ENCODE measurements at regions of chr9 and their contacts with region 1.

Region 1: GRCh38 chr9:120916588-120916987 is 10.0 kb downstream of the TRAF1 start:
- DNase-seq: no peak
- H3K4me3 ChIP-seq: no peak overlapping the region
- H3K4me3 Mint-ChIP-seq: peak overlapping the region in 6 of 7 donors; percentile 47 to 88 (median 74)
- H3K27ac ChIP-seq: no peak overlapping the region
- H3K27ac Mint-ChIP-seq: peak overlapping the region; percentile 1 to 99 (median 87)
- H3K4me1 ChIP-seq: peaks cover 82% of the 10 kb centered on the region
- H3K4me1 Mint-ChIP-seq: peaks cover 75 to 98% (median 86%) of the 10 kb centered on the region in 3 donors
- H3K27me3 ChIP-seq: no peaks in the 10 kb centered on the region
- H3K27me3 Mint-ChIP-seq: no peaks in the 10 kb centered on the region

Region 2: GRCh38 chr9:120904061-120904977 is 12.3 kb before region 1 on chr9:
- CTCF ChIA-PET with region 1: interaction called, 20 read pairs
- POLR2A ChIA-PET with region 1: interaction called, 67 read pairs
- DNase-seq: peak; percentile 47 to 85 (median 69)
- H3K4me3 ChIP-seq: no peak overlapping the region
- H3K4me3 Mint-ChIP-seq: peak overlapping the region; percentile 19 to 78 (median 59)
- H3K27ac ChIP-seq: peak overlapping the region; percentile 63
- H3K27ac Mint-ChIP-seq: peak overlapping the region; percentile 92 to 98 (median 96)
- H3K4me1 ChIP-seq: peaks cover 85% of the 10 kb centered on the region
- H3K4me1 Mint-ChIP-seq: peaks cover 74 to 91% (median 87%) of the 10 kb centered on the region in 3 donors
- H3K27me3 ChIP-seq: no peaks in the 10 kb centered on the region
- H3K27me3 Mint-ChIP-seq: no peaks in the 10 kb centered on the region

Region 3: DNA sequence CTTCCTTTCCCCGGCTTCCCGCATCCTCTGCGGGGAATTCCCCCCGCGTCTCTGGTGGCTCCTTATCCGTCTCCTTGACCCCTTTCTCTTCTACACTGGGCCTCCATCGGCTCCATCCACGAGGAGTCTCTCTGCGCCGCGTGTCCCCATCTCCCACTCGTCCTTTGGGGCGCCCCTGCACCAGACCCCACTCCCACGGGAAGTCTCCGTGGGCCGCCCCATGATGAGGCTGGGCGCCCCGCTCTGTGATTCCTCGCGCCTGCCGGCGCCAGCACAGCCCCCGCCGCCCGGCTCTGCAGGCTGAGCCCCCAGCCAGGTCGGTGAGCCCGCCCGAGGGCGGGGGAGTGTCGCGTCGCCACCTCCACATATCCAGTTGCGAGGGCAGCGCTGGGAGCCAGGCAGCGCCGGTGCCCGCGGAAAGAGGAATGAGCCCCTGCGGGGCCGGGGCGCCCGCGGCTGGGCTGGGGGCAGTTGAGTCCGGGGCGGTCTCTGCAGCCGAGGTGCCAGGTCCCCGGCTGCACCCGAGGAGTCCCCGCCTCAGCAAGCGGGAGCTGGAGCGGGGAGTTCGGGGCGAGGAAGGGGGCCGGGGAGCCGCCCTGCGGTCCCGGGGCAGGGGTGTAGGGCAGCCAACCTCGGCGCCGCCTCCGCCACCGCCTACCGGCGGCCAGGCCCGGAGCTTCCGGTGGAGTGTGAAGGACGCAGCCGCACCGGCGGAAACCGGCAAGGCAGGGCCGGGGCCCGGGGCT is 12.1 kb after region 1 on chr9:
- CTCF ChIA-PET with region 1: interaction called, 52 read pairs
- POLR2A ChIA-PET with region 1: interaction called, 36 read pairs
- DNase-seq: peak; percentile 65 to 89 (median 79)
- H3K4me3 ChIP-seq: peak overlapping the region; percentile 76
- H3K4me3 Mint-ChIP-seq: peak overlapping the region; percentile 91 to 99 (median 96)
- H3K27ac ChIP-seq: peak overlapping the region; percentile 85
- H3K27ac Mint-ChIP-seq: peak overlapping the region; percentile 95 to 100 (median 99)
- H3K4me1 ChIP-seq: peaks cover 86% of the 10 kb centered on the region
- H3K4me1 Mint-ChIP-seq: peaks cover 82 to 90% (median 85%) of the 10 kb centered on the region in 3 donors
- H3K27me3 ChIP-seq: no peaks in the 10 kb centered on the region
- H3K27me3 Mint-ChIP-seq: no peaks in the 10 kb centered on the region

Region 4: DNA sequence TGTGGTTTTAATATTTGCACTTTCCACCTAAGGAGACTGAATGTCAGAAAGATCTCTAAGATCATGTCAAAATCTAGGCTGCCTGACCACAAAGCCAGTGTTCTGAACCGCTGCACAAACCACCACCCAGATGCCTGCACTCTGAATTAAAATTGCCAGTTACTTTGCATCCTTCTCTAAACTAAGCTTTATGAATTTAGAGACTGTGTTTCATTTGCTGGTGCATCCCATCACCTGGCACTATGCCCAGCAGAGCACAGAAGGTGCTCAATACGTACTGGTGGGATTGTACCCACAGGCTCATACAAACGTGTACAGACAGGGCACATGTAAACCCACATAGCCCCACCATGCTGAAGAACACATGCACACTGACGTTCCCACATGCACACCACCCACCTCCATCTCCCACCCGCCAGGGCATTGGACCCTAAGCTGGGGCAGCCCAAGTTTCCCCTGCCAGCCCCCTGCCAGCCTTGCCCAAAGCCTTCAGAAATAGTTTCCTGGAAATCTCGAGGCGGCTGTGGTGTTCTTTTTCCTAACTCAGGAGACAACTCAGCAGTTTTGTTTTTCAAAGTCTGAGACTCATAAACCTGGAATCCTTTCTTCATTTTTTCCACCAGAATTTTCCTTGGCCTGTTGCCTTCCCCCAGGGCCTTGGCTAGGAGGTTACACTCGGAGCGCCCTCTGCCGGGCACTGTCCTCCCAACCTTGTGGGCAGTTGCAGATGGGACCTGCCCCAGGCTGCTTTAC is 19.6 kb after region 1 on chr9:
- CTCF ChIA-PET with region 1: interaction called, 52 read pairs
- POLR2A ChIA-PET with region 1: interaction called, 36 read pairs
- DNase-seq: peak; percentile 78 to 90 (median 85)
- H3K4me3 ChIP-seq: peak overlapping the region; percentile 10
- H3K4me3 Mint-ChIP-seq: peak overlapping the region; percentile 3 to 85 (median 60)
- H3K27ac ChIP-seq: peak overlapping the region; percentile 52
- H3K27ac Mint-ChIP-seq: peak overlapping the region; percentile 88 to 96 (median 92)
- H3K4me1 ChIP-seq: peaks cover 68% of the 10 kb centered on the region
- H3K4me1 Mint-ChIP-seq: peaks cover 58 to 62% (median 58%) of the 10 kb centered on the region in 3 donors
- H3K27me3 ChIP-seq: no peaks in the 10 kb centered on the region
- H3K27me3 Mint-ChIP-seq: no peaks in the 10 kb centered on the region

Measured in CD8-positive, alpha-beta memory T cell (primary cell).